ENCODE measurements at regions of chr12 and their contacts with region 1.

Region 1: GRCh38 chr12:106118386-106119130 is 20.2 kb downstream of the NUAK1 start:
- DNase-seq: no peak
- H3K4me3 ChIP-seq: no peak overlapping the region
- H3K27ac ChIP-seq: no peak overlapping the region
- H3K4me1 ChIP-seq: peaks cover 9% of the 10 kb centered on the region
- H3K27me3 ChIP-seq: no peaks in the 10 kb centered on the region
- CTCF ChIP-seq: no peak
- POLR2A ChIP-seq: no peak

Region 2: GRCh38 chr12:106097011-106097410 is 21.5 kb before region 1 on chr12:
- CTCF ChIA-PET with region 1: no interaction called
- POLR2A ChIA-PET with region 1: no interaction called
- dilution Hi-C with region 1: no loop called
- intact Hi-C with region 1: no loop called
- DNase-seq: peak; percentile 55
- H3K4me3 ChIP-seq: no peak overlapping the region
- H3K27ac ChIP-seq: no peak overlapping the region
- H3K4me1 ChIP-seq: peaks cover 14% of the 10 kb centered on the region
- H3K27me3 ChIP-seq: no peaks in the 10 kb centered on the region
- CTCF ChIP-seq: no peak
- POLR2A ChIP-seq: no peak

Region 3: DNA sequence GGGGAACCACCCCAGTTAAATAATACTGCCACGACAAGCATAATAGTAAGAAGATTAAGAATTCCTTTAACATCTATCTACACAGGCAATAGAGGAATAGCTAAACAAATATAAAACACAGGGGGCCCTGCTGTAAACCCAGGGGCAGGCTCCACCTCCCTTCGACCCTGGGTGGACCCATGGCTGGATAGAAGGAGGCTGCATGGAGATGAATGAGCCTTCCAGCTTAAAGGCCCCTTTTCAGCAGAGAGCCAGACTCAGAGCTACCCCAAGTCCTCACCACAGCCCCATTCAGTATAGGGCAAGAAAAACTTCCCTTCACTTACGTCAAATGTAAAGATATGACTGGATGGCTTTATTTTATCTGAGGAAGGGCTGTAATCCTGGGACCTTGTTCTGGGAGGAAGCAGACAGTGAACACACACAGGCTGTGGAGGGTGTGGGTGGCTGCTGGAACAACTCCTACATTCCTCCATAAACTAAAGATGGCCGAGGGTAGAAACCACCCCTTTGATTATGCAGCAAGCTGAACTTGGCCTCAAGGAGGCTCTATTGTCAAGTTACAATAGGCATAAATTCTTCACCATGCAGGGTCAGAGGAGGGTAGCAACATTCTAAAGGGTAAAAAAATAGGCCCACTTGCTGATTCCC is 10.2 kb before region 1 on chr12:
- CTCF ChIA-PET with region 1: interaction called, 11 read pairs
- POLR2A ChIA-PET with region 1: no interaction called
- dilution Hi-C with region 1: no loop called
- intact Hi-C with region 1: no loop called
- DNase-seq: no peak
- H3K4me3 ChIP-seq: no peak overlapping the region
- H3K27ac ChIP-seq: no peak overlapping the region
- H3K4me1 ChIP-seq: peaks cover 34% of the 10 kb centered on the region
- H3K27me3 ChIP-seq: no peaks in the 10 kb centered on the region
- CTCF ChIP-seq: no peak
- POLR2A ChIP-seq: no peak

Region 4: DNA sequence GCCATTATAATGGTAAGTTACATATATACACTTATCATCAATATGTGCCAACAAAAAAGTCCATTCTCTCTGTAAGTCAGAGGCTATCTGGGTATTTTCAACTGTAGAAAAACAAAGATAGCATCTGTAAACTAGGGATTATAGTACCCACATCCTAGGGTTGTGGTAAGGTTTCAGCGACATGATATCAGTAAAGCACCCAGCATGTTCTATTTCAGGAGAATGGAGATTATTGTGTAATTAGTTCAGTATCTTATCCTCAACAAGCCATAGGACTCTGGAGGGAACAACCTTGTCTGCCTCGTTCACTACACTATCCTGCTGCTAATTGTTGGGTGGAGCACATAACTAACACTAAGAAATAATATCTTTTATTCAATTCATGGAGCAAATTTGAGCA is 149.0 kb after region 1 on chr12:
- CTCF ChIA-PET with region 1: no interaction called
- POLR2A ChIA-PET with region 1: no interaction called
- dilution Hi-C with region 1: no loop called
- intact Hi-C with region 1: no loop called
- DNase-seq: no peak
- H3K4me3 ChIP-seq: no peak overlapping the region
- H3K27ac ChIP-seq: no peak overlapping the region
- H3K4me1 ChIP-seq: no peaks in the 10 kb centered on the region
- H3K27me3 ChIP-seq: peaks cover 3 to 18% of the 10 kb centered on the region in 2 experiments
- CTCF ChIP-seq: no peak
- POLR2A ChIP-seq: no peak